Activated CD4-positive, alpha-beta T cell treated with anti-CD3 and anti-CD28 coated beads for 36 hours (primary cell): ENCODE measurements at regions of chr19 and their contacts with region 1.

Region 1: GRCh38 chr19:52048555-52049501 is at the start of gene ZNF432:
- DNase-seq: peak; percentile 88
- ATAC-seq: peak; percentile 88
- H3K4me3 Mint-ChIP-seq: peak within 1 kb of the TSS; percentile 94
- H3K27ac Mint-ChIP-seq: peak within 1 kb of the TSS; percentile 100
- H3K4me1 Mint-ChIP-seq: peaks cover 16% of the 10 kb centered on the region
- H3K27me3 Mint-ChIP-seq: no peaks in the 10 kb centered on the region
- total RNA-seq, gene ZNF432: 11.5 to 12.8 TPM

Region 2: GRCh38 chr19:51904331-51905165 is 144.3 kb before region 1 on chr19 and contains the start of gene ZNF649:
- CTCF ChIA-PET with region 1: no interaction called
- POLR2A ChIA-PET with region 1: no interaction called
- intact Hi-C with region 1: loop called in 1 of 2 experiments (anchors 1 kb)
- DNase-seq: peak; percentile 89
- ATAC-seq: peak; percentile 92
- H3K4me3 Mint-ChIP-seq: peak within 1 kb of the TSS; percentile 91
- H3K27ac Mint-ChIP-seq: peak within 1 kb of the TSS; percentile 99
- H3K4me1 Mint-ChIP-seq: peaks cover 22% of the 10 kb centered on the region
- H3K27me3 Mint-ChIP-seq: peaks cover 18% of the 10 kb centered on the region
- total RNA-seq, gene ZNF649: 9.6 to 11.2 TPM

Region 3: GRCh38 chr19:52028027-52028779 is 20.6 kb before region 1 on chr19 and contains the start of gene ZNF614:
- CTCF ChIA-PET with region 1: no interaction called
- POLR2A ChIA-PET with region 1: no interaction called
- intact Hi-C with region 1: loop called (anchors 1 kb)
- DNase-seq: peak; percentile 93
- ATAC-seq: peak; percentile 94
- H3K4me3 Mint-ChIP-seq: peak within 1 kb of the TSS; percentile 81
- H3K27ac Mint-ChIP-seq: peak within 1 kb of the TSS; percentile 88
- H3K4me1 Mint-ChIP-seq: peaks cover 13% of the 10 kb centered on the region
- H3K27me3 Mint-ChIP-seq: no peaks in the 10 kb centered on the region
- total RNA-seq, gene ZNF614: 9.4 to 10.6 TPM